PC-9 (cell line): ENCODE measurements at regions of chr3 and their contacts with region 1.

Region 1: GRCh38 chr3:160449636-160450598 is at the start of gene TRIM59:
- DNase-seq: peak; percentile 88 to 95
- H3K4me3 ChIP-seq: peak within 1 kb of the TSS; percentile 76
- H3K27ac ChIP-seq: peak within 1 kb of the TSS; percentile 51
- H3K4me1 ChIP-seq: peaks cover 21% of the 10 kb centered on the region
- H3K27me3 ChIP-seq: no peaks in the 10 kb centered on the region
- CTCF ChIP-seq: peak; percentile 10; the same call in 1 of the 2 replicates
- total RNA-seq, gene TRIM59: 14.4 and 23.3 TPM in 2 replicates

Region 2: GRCh38 chr3:160368804-160369203 is 81.1 kb before region 1 on chr3:
- CTCF ChIA-PET with region 1: no interaction called
- POLR2A ChIA-PET with region 1: no interaction called
- intact Hi-C with region 1: no loop called
- DNase-seq: no peak
- H3K4me3 ChIP-seq: no peak overlapping the region
- H3K27ac ChIP-seq: no peak overlapping the region
- H3K4me1 ChIP-seq: no peaks in the 10 kb centered on the region
- H3K27me3 ChIP-seq: no peaks in the 10 kb centered on the region
- CTCF ChIP-seq: no peak

Region 3: DNA sequence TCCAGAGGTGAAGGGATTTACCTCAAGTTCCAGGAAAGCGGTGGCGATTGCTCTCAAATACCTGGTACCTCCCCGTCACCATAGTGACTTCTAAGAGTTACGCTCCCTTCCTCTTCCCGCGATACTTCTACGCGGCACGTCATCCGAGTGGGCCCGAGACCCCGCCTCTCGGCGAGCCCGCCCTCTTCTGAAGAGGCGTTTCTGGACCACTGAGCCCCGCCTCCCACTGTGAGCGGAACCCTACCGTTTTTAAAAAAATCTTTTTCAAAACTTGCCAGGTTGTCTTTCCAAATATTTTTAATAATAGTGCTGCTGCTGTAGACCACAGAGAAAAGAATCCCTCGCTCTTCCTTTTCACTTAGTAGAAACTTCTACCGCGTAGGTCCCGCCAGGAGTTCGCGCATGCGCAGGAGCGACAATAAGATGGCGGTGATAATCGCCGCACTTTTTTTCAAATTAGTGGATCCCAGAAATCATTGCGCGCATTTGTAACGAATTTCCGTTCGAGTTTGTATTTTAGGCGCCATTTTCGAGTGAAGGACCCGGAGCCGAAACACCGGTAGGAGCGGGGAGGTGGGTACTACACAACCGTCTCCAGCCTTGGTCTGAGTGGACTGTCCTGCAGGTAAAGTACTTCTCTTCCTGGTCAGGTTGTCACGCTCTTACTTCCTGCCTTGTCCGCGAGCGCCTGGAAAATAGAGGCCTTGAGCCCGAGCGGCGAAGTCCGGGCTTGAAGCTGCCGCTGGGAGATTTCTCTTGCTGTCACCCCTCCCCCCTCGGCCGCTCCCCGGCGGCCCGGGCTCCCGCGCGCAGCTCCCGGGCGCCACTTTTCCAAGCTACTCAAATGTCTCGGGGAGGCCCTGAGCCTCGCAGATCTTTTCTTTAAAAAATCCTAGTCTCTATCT is 50.5 kb before region 1 on chr3 and contains the starts of genes IFT80 and SMC4:
- CTCF ChIA-PET with region 1: no interaction called
- POLR2A ChIA-PET with region 1: interaction called, 3 read pairs
- intact Hi-C with region 1: loop called (anchors 2 kb)
- DNase-seq: peak; percentile 91 to 98
- H3K4me3 ChIP-seq: peak within 1 kb of the TSS; percentile 90
- H3K27ac ChIP-seq: peak within 1 kb of the TSS; percentile 67
- H3K4me1 ChIP-seq: peaks cover 32% of the 10 kb centered on the region
- H3K27me3 ChIP-seq: no peaks in the 10 kb centered on the region
- CTCF ChIP-seq: no peak
- total RNA-seq, gene IFT80: 47.9 and 59.4 TPM in 2 replicates
- total RNA-seq, gene SMC4: 138 and 181 TPM in 2 replicates

Region 4: DNA sequence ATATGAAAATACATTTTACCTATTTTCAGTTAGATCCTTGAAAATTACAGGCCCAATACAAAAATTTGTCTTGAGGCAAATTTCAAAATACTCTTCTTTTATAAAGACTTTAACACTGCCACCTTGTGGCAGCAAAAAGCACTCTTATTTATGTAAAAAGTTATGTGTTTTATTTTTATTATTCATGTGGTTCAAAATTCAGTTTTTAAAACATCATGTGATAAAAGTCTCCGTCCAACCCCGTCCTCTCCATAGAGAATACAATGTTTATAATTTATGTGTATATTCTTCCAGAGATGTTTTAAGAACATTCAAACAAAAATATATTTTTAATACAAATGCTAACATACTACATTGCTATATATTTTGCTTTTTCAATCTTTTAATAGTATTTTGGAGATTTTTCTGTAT is 36.5 kb after region 1 on chr3:
- CTCF ChIA-PET with region 1: interaction called, 13 read pairs
- POLR2A ChIA-PET with region 1: interaction called, 4 read pairs
- intact Hi-C with region 1: no loop called
- DNase-seq: no peak
- H3K4me3 ChIP-seq: no peak overlapping the region
- H3K27ac ChIP-seq: no peak overlapping the region
- H3K4me1 ChIP-seq: no peaks in the 10 kb centered on the region
- H3K27me3 ChIP-seq: no peaks in the 10 kb centered on the region
- CTCF ChIP-seq: peak; percentile 85

Region 5: DNA sequence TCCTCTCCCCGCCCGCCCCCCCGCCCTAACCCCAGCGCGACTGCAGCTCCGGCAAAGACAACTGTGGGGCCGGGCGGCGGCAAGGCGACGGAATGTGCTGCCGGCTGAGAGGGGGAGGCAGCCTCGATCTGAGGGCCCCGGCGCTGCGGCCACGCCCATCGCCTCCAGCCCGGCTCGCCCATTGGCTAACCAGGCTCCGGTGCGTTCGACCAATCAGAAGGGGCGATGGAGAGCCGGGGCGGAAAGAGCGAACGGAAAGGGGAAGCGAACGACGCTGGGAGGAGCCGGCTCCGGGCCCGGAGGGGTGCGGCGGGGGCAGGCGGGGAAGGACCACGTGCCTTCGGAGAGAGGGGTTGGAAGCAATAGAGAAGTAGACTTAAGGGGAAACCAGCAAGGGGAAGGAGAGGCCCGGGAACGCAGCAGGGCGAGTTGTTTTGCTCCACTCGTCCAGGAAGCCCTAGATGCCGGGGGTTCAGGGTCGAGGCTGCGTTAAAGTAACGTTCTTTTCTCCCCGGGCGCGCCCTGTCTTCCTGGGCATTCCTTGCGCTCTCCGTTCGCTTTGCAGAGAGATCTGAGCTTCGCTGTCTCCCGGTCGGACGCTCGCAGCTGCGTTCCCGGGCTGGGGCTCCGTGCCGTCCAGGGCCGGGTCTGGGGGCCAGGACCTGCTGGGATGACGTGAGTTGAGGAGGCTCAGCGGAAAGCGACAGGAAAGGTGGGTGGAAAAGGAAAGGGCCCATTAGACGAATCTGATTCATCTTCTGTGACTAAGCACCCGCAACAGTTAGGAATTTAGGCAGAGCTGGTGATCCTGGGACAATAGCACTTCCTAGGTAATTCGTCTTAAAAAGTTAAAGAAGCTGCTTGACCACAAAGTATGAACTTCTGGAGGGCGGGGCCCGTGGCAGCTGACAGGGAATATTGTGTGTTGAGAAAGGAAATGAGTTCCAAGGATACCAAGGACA is 115.8 kb after region 1 on chr3 and contains the start of gene KPNA4:
- CTCF ChIA-PET with region 1: no interaction called
- POLR2A ChIA-PET with region 1: no interaction called
- intact Hi-C with region 1: loop called (anchors 5 kb)
- DNase-seq: peak; percentile 94 to 99
- H3K4me3 ChIP-seq: peak within 1 kb of the TSS; percentile 86
- H3K27ac ChIP-seq: peak within 1 kb of the TSS; percentile 98
- H3K4me1 ChIP-seq: peaks cover 40% of the 10 kb centered on the region
- H3K27me3 ChIP-seq: no peaks in the 10 kb centered on the region
- CTCF ChIP-seq: no peak
- total RNA-seq, gene KPNA4: 49.2 and 61.0 TPM in 2 replicates

Region 6: DNA sequence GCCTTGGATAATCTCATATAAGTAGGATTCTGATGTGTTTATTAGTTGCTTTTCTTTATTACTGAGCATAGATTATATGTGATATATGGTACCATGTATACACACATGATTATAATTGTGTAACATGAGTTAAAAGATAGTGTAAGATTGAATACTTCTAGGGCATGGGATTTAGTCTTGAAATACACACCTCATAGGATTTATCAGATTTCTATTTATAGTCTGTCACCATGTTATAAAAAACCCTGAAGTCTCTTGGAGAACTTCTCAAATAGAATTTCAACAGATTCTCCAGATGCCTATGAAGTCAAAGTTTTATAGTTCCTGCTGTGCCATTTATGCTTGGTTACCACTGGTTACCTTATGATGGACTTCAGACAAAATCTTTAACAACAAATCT is 126.7 kb after region 1 on chr3:
- CTCF ChIA-PET with region 1: no interaction called
- POLR2A ChIA-PET with region 1: no interaction called
- intact Hi-C with region 1: no loop called
- DNase-seq: no peak
- H3K4me3 ChIP-seq: no peak overlapping the region
- H3K27ac ChIP-seq: no peak overlapping the region
- H3K4me1 ChIP-seq: peaks cover 7% of the 10 kb centered on the region; the same call in 1 of the 2 replicates
- H3K27me3 ChIP-seq: no peaks in the 10 kb centered on the region
- CTCF ChIP-seq: no peak

Region 7: GRCh38 chr3:160941885-160942494 is 492.1 kb after region 1 on chr3:
- CTCF ChIA-PET with region 1: no interaction called
- POLR2A ChIA-PET with region 1: no interaction called
- intact Hi-C with region 1: loop called (anchors 5 kb)
- DNase-seq: peak; percentile 50 to 66
- H3K4me3 ChIP-seq: no peak overlapping the region
- H3K27ac ChIP-seq: no peak overlapping the region
- H3K4me1 ChIP-seq: no peaks in the 10 kb centered on the region
- H3K27me3 ChIP-seq: no peaks in the 10 kb centered on the region
- CTCF ChIP-seq: peak; percentile 93

Region 8: DNA sequence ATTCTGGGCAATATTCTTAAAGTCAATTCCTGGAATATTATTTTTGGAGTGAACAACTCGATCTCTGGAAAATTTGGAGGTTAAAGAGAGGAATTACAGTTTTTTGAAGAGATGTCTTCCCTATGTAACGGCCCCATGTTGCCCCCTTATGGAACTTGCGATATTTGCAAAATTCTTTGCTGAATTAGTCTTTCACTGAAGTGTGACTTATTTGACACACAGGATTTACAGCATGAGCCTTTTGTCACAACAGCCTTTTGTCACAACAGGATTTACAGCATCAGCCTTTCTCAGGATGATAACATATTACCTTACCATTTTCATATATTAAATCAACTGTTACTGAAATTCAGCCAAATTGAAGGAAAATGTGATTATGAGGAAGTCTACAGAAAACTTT is 959.2 kb after region 1 on chr3:
- CTCF ChIA-PET with region 1: no interaction called
- POLR2A ChIA-PET with region 1: no interaction called
- intact Hi-C with region 1: loop called (anchors 5 kb)
- DNase-seq: peak; percentile 37 to 56
- H3K4me3 ChIP-seq: no peak overlapping the region
- H3K27ac ChIP-seq: no peak overlapping the region
- H3K4me1 ChIP-seq: peaks cover 21% of the 10 kb centered on the region
- H3K27me3 ChIP-seq: no peaks in the 10 kb centered on the region
- CTCF ChIP-seq: peak; percentile 74